ENCODE measurements at regions of chr9 and their contacts with region 1.

Region 1: DNA sequence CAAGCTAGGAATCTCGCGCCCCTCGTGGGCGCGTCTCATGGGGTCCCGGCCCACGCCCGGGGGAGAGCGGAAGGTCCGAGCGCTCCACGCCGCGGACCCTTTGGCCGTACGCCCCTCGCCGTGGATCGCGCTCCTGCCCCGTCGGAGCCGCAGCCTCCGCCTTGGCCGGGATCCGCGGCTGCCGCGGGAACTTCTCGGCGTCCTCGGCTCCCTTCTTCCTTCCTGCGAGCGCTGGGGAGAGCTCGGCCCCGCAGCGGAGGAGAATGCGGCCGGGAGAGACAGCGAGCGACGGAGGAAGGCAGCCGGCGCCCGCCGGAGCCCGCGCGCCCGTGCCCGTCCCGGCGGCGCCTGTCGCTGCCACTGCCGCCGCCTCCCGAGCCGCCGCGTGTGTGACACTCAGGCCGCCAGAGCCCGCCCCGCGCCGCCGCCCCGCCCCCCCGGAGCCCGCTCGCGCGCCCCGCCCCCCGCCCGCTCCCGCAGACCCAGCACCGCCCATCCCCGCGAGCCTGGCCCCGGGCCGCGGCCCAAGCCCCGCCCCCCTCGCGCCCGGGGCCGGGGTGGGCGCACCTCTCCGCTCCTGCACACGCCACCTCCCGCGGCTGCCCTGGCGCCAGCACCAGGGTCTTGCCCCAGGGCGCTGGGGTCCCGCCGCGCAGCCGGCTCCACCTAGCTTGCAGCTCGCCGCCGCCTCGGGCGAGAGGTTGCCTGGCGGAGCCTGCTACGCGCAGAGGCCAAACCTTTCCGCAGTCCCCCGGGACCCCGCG is at the start of gene SHB:
- DNase-seq: peak in 1 of 2 experiments; percentile 74
- H3K4me3 ChIP-seq: peak within 1 kb of the TSS; percentile 90
- H3K27ac ChIP-seq: peak within 1 kb of the TSS; percentile 91
- H3K4me1 ChIP-seq: peaks cover 43% of the 10 kb centered on the region
- H3K27me3 ChIP-seq: no peaks in the 10 kb centered on the region
- CTCF ChIP-seq: no peak; the same call in 1 of the 2 replicates
- total RNA-seq, gene SHB: 22.7 and 23.8 TPM in 2 replicates

Region 2: DNA sequence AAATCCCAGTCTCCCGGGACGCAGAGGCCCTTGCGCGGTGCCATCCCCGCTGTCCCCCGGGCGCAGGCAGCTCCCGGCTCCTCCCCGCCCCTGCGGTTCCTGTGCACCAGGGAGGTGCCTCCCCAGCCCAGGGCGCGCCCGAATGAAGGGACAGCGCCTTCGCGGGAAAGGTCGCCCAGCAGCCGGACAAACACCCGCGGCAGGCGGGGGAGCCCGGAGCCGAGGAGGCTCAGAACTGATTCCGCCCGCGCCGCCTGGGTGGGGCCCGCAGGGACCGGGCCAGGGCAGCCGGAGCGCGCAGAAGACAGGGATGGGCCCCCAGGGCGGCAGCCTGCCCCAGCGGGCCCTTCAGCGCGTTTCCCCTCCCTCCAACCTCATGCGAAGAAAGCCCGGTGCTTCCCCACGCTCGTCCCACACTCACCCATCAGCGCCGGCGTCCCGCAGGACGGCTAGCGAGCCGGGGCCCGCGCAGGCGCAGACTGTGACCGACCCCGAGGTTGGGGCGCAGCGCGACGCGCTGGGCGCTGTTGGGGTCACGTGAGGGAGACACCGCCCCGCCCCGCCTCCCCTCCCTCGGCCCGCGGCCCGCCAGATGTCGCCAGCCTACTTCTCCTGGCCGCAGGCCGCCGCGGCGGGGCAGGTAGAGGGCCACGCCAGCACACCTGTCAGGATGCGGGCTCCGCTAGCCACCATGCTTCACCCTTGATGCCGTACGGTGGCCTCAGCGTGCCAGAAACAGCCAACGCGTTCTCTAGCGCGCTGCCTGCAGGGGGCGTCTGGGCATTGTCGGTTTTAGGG is 165.2 kb before region 1 on chr9 and contains the start of gene SLC25A51:
- CTCF ChIA-PET with region 1: no interaction called
- POLR2A ChIA-PET with region 1: no interaction called
- intact Hi-C with region 1: loop called (anchors 2 kb)
- DNase-seq: peak; percentile 74 to 90
- H3K4me3 ChIP-seq: peak within 1 kb of the TSS; percentile 76
- H3K27ac ChIP-seq: peak within 1 kb of the TSS; percentile 42
- H3K4me1 ChIP-seq: peaks cover 18% of the 10 kb centered on the region
- H3K27me3 ChIP-seq: no peaks in the 10 kb centered on the region
- CTCF ChIP-seq: peak; percentile 76; the same call in 1 of the 2 replicates
- total RNA-seq, gene SLC25A51: 12.7 and 14.9 TPM in 2 replicates

Region 3: DNA sequence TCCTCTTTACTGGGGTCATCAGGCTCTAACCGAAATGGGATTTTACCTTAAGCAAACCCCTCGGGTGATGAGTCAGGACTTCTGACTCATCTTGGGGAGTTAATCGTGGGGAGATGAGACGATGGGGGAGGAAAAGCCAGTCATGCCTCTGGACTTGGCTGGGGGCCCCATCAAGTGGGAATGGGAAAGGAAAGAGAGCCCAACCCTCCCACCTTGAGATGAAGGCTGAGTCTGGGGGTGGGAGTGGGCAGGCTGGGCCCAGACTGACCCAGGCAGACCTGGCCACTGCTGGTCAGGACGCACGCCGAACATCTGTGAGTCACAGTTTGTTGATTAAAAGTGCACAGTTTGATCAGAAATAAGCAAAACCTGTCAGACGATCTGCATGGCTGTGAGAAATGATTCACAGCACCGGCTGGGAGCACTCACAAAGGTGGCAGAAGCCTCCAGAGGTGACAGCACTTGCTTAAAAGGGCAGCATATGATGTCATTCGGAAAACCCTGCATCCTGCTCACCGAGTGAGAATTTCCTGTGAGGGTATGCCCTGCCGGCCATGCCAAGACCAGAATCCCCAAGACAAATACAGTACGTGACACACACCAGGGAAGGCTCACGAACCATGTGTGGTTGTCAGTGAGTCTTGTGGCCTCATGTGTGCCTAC is 115.1 kb before region 1 on chr9:
- CTCF ChIA-PET with region 1: no interaction called
- POLR2A ChIA-PET with region 1: no interaction called
- intact Hi-C with region 1: loop called (anchors 5 kb)
- DNase-seq: peak; percentile 70 to 95
- H3K4me3 ChIP-seq: no peak overlapping the region
- H3K27ac ChIP-seq: peak overlapping the region; percentile 76
- H3K4me1 ChIP-seq: peaks cover 29% of the 10 kb centered on the region
- H3K27me3 ChIP-seq: no peaks in the 10 kb centered on the region
- CTCF ChIP-seq: no peak

Region 4: GRCh38 chr9:38026021-38026809 is 42.8 kb before region 1 on chr9:
- CTCF ChIA-PET with region 1: no interaction called
- POLR2A ChIA-PET with region 1: no interaction called
- intact Hi-C with region 1: no loop called
- DNase-seq: peak; percentile 61 to 93
- H3K4me3 ChIP-seq: peak overlapping the region; percentile 28; the same call in 1 of the 2 replicates
- H3K27ac ChIP-seq: peak overlapping the region; percentile 93
- H3K4me1 ChIP-seq: peaks cover 93% of the 10 kb centered on the region
- H3K27me3 ChIP-seq: no peaks in the 10 kb centered on the region
- CTCF ChIP-seq: no peak

Region 5: GRCh38 chr9:38047301-38048251 is 21.5 kb before region 1 on chr9:
- CTCF ChIA-PET with region 1: interaction called, 4 read pairs
- POLR2A ChIA-PET with region 1: interaction called, 4 read pairs
- intact Hi-C with region 1: loop called (anchors 1 kb)
- DNase-seq: peak; percentile 78 to 95
- H3K4me3 ChIP-seq: peak overlapping the region; percentile 56
- H3K27ac ChIP-seq: peak overlapping the region; percentile 100
- H3K4me1 ChIP-seq: peaks cover 79% of the 10 kb centered on the region
- H3K27me3 ChIP-seq: no peaks in the 10 kb centered on the region
- CTCF ChIP-seq: no peak

Region 6: GRCh38 chr9:38200431-38200830 is 131.4 kb after region 1 on chr9:
- CTCF ChIA-PET with region 1: no interaction called
- POLR2A ChIA-PET with region 1: no interaction called
- intact Hi-C with region 1: no loop called
- DNase-seq: no peak
- H3K4me3 ChIP-seq: no peak overlapping the region
- H3K27ac ChIP-seq: no peak overlapping the region
- H3K4me1 ChIP-seq: peaks cover 10% of the 10 kb centered on the region
- H3K27me3 ChIP-seq: no peaks in the 10 kb centered on the region
- CTCF ChIP-seq: no peak

Region 7: GRCh38 chr9:38227061-38227540 is 158.1 kb after region 1 on chr9:
- CTCF ChIA-PET with region 1: no interaction called
- POLR2A ChIA-PET with region 1: no interaction called
- intact Hi-C with region 1: loop called (anchors 1 kb)
- DNase-seq: peak; percentile 92 to 96
- H3K4me3 ChIP-seq: peak overlapping the region; percentile 24; the same call in 1 of the 2 replicates
- H3K27ac ChIP-seq: peak overlapping the region; percentile 90
- H3K4me1 ChIP-seq: peaks cover 30% of the 10 kb centered on the region
- H3K27me3 ChIP-seq: no peaks in the 10 kb centered on the region
- CTCF ChIP-seq: no peak